Esophagus squamous epithelium (tissue), 5 donors: ENCODE measurements at regions of chr19 and their contacts with region 1.

Region 1: GRCh38 chr19:48868114-48868886 is at the start of gene PLEKHA4:
- DNase-seq: no peak
- H3K4me3 ChIP-seq: peak within 1 kb of the TSS; percentile 16 to 64 (median 40)
- H3K27ac ChIP-seq: peak within 1 kb of the TSS; percentile 71 to 91 (median 82)
- H3K4me1 ChIP-seq: peaks cover 20 to 44% (median 23%) of the 10 kb centered on the region in 3 donors
- H3K27me3 ChIP-seq: no peaks in the 10 kb centered on the region
- CTCF ChIP-seq: no peak
- POLR2A ChIP-seq: no peak
- total RNA-seq, gene PLEKHA4: 2.8 to 9.0 (median 5.6) TPM

Region 2: DNA sequence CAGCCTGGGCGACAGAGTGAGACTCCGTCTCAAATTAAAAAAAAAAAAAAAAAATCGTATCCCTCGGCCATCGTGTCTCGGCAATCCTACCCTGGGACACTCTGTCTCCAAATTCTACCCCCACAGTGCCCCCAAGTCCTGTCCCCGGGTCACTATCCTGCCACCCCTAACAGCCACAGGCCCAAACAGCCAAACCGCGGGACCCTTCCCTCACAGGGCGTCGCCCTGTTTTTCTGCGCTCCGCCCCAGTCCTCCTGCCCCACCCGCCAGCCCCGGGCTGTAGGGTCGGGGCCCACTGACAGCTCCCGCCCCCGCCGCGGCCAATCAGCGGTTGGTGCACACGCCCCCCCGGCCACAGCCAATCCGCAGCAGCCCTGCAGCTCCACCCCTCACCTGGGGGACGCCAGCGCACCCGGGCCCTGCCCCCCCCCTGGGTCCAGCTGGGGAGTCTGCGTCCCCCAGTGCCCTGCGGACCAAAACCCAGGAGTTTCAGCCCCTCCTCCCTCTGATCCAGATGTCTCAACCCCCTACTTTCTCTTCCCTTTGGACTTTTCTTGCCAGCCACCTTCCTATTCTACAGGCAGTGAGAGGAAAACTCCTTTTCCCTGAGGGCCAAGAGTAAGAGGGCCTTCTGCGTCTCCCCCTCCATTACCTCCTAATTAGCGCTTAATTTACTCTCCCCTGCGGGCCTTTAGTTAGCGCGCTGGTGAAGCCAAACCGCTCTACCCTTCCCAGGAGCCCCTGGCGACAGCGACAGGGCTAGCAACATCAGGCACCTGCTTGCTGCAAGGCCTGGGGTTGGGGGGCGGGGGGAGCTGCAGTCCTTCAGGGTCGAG is 56.0 kb before region 1 on chr19:
- intact Hi-C with region 1: no loop called
- DNase-seq: peak; percentile 28
- H3K4me3 ChIP-seq: peak overlapping the region; percentile 40 to 89 (median 72)
- H3K27ac ChIP-seq: peak overlapping the region; percentile 69 to 95 (median 87)
- H3K4me1 ChIP-seq: peaks cover 15 to 63% (median 20%) of the 10 kb centered on the region in 3 donors
- H3K27me3 ChIP-seq: no peaks in the 10 kb centered on the region
- CTCF ChIP-seq: no peak
- POLR2A ChIP-seq: peak in 2 of 4 donors; percentile 65 to 72

Region 3: GRCh38 chr19:48970923-48971395 is 102.7 kb after region 1 on chr19:
- intact Hi-C with region 1: loop called (anchors 10 kb)
- DNase-seq: no peak
- H3K4me3 ChIP-seq: no peak overlapping the region
- H3K27ac ChIP-seq: no peak overlapping the region
- H3K4me1 ChIP-seq: peaks cover 14 to 41% (median 22%) of the 10 kb centered on the region in 3 donors
- H3K27me3 ChIP-seq: no peaks in the 10 kb centered on the region
- CTCF ChIP-seq: peak; percentile 76 to 90 (median 87)
- POLR2A ChIP-seq: no peak

Region 4: DNA sequence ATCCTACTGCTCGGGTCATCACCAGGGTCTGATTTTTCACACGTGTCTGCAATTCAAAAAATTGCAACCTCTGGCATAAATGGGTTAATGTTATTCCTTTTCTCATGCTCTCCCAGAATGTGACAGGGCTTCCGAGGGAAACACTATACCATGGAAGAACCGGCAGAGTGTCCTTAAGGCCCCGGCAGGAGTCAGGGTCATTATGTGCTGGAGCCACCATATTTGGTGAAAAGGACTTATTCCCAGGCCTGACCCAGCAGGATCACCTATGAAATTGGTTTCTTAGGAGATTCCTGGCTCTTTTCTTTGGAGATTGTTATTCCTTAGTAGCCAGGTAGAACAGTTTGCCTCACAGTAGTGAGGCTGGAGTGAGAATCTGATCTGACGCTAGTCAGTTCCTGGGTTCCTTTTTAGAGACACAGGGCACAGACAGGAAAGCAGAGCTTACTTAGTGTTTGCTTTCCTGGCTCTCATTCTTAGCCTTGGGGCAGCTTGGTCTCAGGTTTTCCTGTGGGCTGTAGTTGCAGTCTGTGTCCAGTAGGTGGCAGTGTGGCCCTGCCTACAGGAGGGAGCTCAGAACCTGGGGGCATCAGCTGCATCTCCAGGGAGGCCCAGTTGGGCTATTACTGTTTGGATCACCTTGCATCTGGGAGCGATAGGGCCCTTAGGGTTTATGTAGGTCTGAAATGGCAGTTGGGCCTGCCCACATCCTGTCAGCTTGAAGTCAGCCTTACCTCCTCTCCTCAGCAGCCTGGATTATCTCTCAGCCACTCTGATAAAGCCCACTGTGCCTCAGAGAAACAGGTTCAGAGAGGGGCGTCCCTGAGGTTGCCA is 229.4 kb after region 1 on chr19:
- intact Hi-C with region 1: no loop called
- DNase-seq: no peak
- H3K4me3 ChIP-seq: no peak overlapping the region
- H3K27ac ChIP-seq: peak overlapping the region in 2 of 4 donors; percentile 5 to 23
- H3K4me1 ChIP-seq: peaks cover 0 to 29% (median 5%) of the 10 kb centered on the region in 3 donors
- H3K27me3 ChIP-seq: no peaks in the 10 kb centered on the region
- CTCF ChIP-seq: peak; percentile 98 to 100 (median 98)
- POLR2A ChIP-seq: no peak